ENCODE measurements at regions of chr7 and their contacts with region 1.

Region 1: DNA sequence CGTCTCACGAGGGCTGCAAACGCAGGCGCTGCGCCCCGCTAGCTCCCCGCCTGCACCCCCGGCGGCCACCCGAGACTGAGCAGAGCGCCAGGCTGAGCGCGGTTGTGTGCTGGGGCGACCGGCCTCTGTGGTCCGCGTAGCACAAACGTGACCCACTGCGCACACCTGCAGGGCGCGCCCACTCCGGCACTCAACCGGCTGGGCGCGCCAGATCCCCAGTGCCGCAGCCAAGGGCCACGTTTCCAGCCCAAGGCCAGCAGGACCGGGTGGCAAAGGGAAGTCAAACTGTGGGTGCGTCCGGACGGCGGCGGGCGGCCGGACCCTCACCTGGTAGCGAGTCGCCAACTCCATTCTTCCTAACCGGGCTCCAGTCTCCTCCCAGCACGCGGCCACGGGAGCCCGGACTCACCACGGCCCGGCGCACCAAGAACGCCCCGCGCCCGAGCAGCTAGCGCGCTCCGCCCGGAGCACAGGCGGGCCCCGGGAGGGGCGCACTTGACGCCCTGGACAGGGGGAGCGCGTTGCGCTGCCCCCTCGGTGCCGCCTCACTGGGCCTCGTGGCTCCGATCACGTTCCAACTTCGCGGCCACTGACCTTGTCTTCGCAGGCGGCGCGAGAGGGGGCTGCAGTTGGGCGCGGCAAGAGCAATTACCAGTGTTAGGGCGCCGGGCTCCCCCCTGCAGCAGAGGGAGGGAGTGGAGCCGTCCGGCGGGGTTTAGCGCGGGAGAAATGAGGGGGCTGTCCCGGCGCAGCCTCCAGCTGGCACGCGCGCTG is at the start of gene CDCA7L:
- DNase-seq: peak; percentile 47 to 88
- H3K4me3 ChIP-seq: peak within 1 kb of the TSS; percentile 47 to 95 (median 75)
- H3K27ac ChIP-seq: peak within 1 kb of the TSS; percentile 96
- H3K4me1 ChIP-seq: peaks cover 2 to 18% (median 15%) of the 10 kb centered on the region in 4 experiments; a peak in 5 of 7 replicates
- H3K27me3 ChIP-seq: no peaks in the 10 kb centered on the region
- CTCF ChIP-seq: no peak; a peak in 1 of 4 replicates
- EP300 ChIP-seq: peak in 1 of 2 experiments; percentile 99; a peak in 2 of 3 replicates
- POLR2A ChIP-seq: peak in 1 of 2 experiments; percentile 63
- RAD21 ChIP-seq: no peak
- total RNA-seq, gene CDCA7L: 166 and 168 TPM in 2 replicates

Region 2: DNA sequence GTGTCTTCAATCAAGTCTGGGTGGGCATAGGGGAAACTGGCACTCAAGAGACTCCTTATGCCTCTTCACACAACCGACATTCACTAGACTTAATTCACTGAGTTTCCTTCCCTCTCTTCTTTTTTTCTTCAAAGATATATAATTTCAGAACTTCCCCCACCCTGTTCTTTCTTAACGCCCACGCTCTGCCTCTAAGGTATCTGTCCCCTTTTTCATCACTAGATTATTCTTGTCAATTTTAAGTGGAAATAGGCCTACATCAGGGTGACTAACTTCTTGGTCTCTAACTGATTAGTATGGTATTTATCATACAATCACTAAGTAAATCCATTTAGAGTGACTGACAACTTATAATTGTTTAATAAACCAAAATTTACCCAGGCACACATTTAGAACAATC is 126.6 kb before region 1 on chr7:
- CTCF ChIA-PET with region 1: no interaction called
- POLR2A ChIA-PET with region 1: no interaction called
- DNase-seq: no peak
- H3K4me3 ChIP-seq: no peak overlapping the region
- H3K27ac ChIP-seq: no peak overlapping the region
- H3K4me1 ChIP-seq: no peaks in the 10 kb centered on the region
- H3K27me3 ChIP-seq: no peaks in the 10 kb centered on the region
- CTCF ChIP-seq: no peak
- EP300 ChIP-seq: no peak
- POLR2A ChIP-seq: no peak
- RAD21 ChIP-seq: no peak

Region 3: GRCh38 chr7:21923658-21924057 is 22.0 kb before region 1 on chr7:
- CTCF ChIA-PET with region 1: interaction called, 4 read pairs
- POLR2A ChIA-PET with region 1: interaction called, 23 read pairs
- DNase-seq: no peak
- H3K4me3 ChIP-seq: no peak overlapping the region
- H3K27ac ChIP-seq: no peak overlapping the region
- H3K4me1 ChIP-seq: peaks cover 5 to 16% (median 14%) of the 10 kb centered on the region in 4 experiments; a peak in 6 of 7 replicates
- H3K27me3 ChIP-seq: no peaks in the 10 kb centered on the region
- CTCF ChIP-seq: no peak
- EP300 ChIP-seq: no peak
- POLR2A ChIP-seq: no peak
- RAD21 ChIP-seq: no peak

Region 4: GRCh38 chr7:21934808-21935207 is 10.8 kb before region 1 on chr7:
- CTCF ChIA-PET with region 1: no interaction called
- POLR2A ChIA-PET with region 1: interaction called, 11 read pairs
- DNase-seq: no peak
- H3K4me3 ChIP-seq: no peak overlapping the region
- H3K27ac ChIP-seq: no peak overlapping the region
- H3K4me1 ChIP-seq: peaks cover 3 to 5% (median 4%) of the 10 kb centered on the region in 4 experiments; a peak in 4 of 7 replicates
- H3K27me3 ChIP-seq: no peaks in the 10 kb centered on the region
- CTCF ChIP-seq: no peak
- EP300 ChIP-seq: no peak
- POLR2A ChIP-seq: no peak
- RAD21 ChIP-seq: no peak

Region 5: DNA sequence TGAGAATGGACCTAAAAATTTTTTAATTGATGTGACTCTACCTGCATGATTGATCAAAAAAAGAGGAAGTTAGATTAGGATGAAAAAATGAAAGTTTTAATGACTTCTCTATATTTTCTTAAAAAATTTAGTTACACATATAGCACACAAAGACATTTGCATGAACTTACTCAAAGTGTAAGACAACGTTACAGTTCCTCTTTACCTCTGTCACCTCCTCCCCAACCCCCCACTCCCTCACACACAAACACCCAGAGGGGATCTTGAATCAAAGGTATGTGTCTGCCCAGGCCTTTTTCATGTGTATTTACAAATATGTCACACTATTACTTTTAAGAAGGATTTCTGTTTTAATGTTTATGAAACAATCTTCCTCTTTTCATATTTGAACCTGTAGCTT is 20.6 kb after region 1 on chr7:
- CTCF ChIA-PET with region 1: interaction called, 4 read pairs
- POLR2A ChIA-PET with region 1: interaction called, 14 read pairs
- DNase-seq: no peak
- H3K4me3 ChIP-seq: no peak overlapping the region
- H3K27ac ChIP-seq: no peak overlapping the region
- H3K4me1 ChIP-seq: no peaks in the 10 kb centered on the region
- H3K27me3 ChIP-seq: no peaks in the 10 kb centered on the region
- CTCF ChIP-seq: no peak
- EP300 ChIP-seq: no peak
- POLR2A ChIP-seq: no peak
- RAD21 ChIP-seq: no peak

Region 6: DNA sequence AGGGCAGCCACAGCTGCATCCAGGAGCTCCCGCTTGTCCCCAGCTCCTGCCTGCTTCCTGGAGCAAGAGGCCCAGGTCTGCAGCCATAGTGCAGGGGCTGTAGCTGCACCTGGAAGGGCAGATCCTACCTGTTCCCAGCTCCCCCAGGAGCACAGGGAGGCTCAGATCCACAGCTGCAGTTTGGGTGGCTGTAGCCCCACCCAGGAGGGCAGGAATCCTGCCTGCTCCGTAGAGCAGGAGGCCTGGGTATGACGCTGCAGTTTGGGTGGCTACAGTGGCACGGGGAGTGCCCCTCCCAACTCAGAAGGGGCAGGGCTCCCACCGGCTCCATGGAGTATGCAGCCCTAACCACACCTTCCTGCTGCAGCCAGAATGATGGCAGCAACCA is 26.8 kb after region 1 on chr7:
- CTCF ChIA-PET with region 1: interaction called, 4 read pairs
- POLR2A ChIA-PET with region 1: interaction called, 13 read pairs
- DNase-seq: peak in 1 of 2 experiments; percentile 54
- H3K4me3 ChIP-seq: no peak overlapping the region
- H3K27ac ChIP-seq: peak overlapping the region; percentile 68; the same call in 1 of the 2 replicates
- H3K4me1 ChIP-seq: peaks cover 0 to 7% (median 4%) of the 10 kb centered on the region in 4 experiments; a peak in 5 of 7 replicates
- H3K27me3 ChIP-seq: no peaks in the 10 kb centered on the region
- CTCF ChIP-seq: no peak
- EP300 ChIP-seq: no peak
- POLR2A ChIP-seq: no peak
- RAD21 ChIP-seq: no peak

Region 7: GRCh38 chr7:22841954-22842353 is 896.3 kb after region 1 on chr7:
- CTCF ChIA-PET with region 1: no interaction called
- POLR2A ChIA-PET with region 1: no interaction called
- DNase-seq: no peak
- H3K4me3 ChIP-seq: no peak overlapping the region
- H3K27ac ChIP-seq: no peak overlapping the region
- H3K4me1 ChIP-seq: peaks cover 6 to 7% (median 6%) of the 10 kb centered on the region in 4 experiments; a peak in 6 of 7 replicates
- H3K27me3 ChIP-seq: no peaks in the 10 kb centered on the region
- CTCF ChIP-seq: no peak
- EP300 ChIP-seq: no peak
- POLR2A ChIP-seq: no peak
- RAD21 ChIP-seq: no peak

Measured in H1 (cell line).